Heart right ventricle (tissue), 16 donors: ENCODE measurements at regions of chr18 and their contacts with region 1.

Region 1: GRCh38 chr18:58501066-58501896 is 127.6 kb downstream of the ALPK2 start:
- DNase-seq: no peak
- ATAC-seq: no peak
- H3K4me3 ChIP-seq: no peak overlapping the region
- H3K27ac ChIP-seq: no peak overlapping the region
- H3K4me1 ChIP-seq: peaks cover 0 to 6% (median 0%) of the 10 kb centered on the region in 9 donors
- H3K27me3 ChIP-seq: peaks cover 0 to 5% (median 0%) of the 10 kb centered on the region in 7 donors
- CTCF ChIP-seq: no peak

Region 2: DNA sequence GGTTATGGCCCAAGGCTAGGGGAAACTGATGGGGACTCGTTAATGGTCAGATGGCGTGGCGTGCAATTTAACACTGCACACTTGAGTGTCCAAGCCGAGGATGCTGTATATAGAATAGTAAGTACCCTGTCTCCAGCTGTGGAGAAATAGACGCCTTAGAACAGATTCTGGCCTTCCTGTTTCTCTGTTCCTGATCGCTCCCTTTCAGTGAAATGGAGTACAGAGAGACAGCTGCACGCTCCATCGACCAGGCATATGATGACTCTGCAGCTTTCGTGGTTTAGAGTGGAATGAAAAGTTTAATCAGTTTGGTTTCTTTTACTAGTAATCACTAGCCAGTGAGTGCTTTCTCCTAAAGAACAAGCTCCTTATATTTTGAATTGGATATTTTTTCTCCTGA is 243.8 kb before region 1 on chr18:
- intact Hi-C with region 1: loop called in 1 of 10 experiments (anchors 10 kb)
- DNase-seq: no peak
- ATAC-seq: peak in 7 of 8 donors; percentile 3 to 28 (median 17)
- H3K4me3 ChIP-seq: peak overlapping the region; percentile 36 to 56 (median 50)
- H3K27ac ChIP-seq: peak overlapping the region; percentile 24 to 85 (median 82)
- H3K4me1 ChIP-seq: peaks cover 0 to 19% (median 0%) of the 10 kb centered on the region in 9 donors
- H3K27me3 ChIP-seq: no peaks in the 10 kb centered on the region
- CTCF ChIP-seq: no peak

Region 3: GRCh38 chr18:58373481-58373880 is 127.8 kb before region 1 on chr18:
- intact Hi-C with region 1: no loop called
- DNase-seq: no peak
- ATAC-seq: no peak
- H3K4me3 ChIP-seq: no peak overlapping the region
- H3K27ac ChIP-seq: no peak overlapping the region
- H3K4me1 ChIP-seq: peaks cover 0 to 2% (median 0%) of the 10 kb centered on the region in 9 donors
- H3K27me3 ChIP-seq: no peaks in the 10 kb centered on the region
- CTCF ChIP-seq: no peak

Region 4: GRCh38 chr18:58745914-58746313 is 244.6 kb after region 1 on chr18:
- intact Hi-C with region 1: no loop called
- DNase-seq: no peak
- ATAC-seq: no peak
- H3K4me3 ChIP-seq: no peak overlapping the region
- H3K27ac ChIP-seq: no peak overlapping the region
- H3K4me1 ChIP-seq: no peaks in the 10 kb centered on the region
- H3K27me3 ChIP-seq: no peaks in the 10 kb centered on the region
- CTCF ChIP-seq: no peak